ENCODE measurements at regions of chr4 and their contacts with region 1.

Region 1: DNA sequence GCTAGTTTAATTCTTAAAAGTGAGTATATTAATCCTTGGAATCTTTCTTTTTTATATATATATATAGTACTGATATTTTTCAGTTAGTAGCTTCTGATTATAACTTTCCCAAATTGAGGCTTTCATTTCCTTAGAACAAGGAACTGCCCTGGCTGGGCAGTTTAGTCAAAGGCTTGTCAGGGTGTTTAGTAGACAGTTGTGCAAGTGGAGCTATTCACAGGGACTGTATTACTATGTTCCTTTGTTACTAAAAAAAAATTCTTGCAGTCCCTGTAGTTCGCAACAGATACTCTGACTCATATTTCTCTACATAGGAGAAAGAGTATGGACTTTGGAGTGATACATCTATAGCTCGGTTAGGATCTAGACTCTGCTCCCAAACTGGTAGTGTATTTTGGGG is 20.8 kb downstream of the USO1 start:
- DNase-seq: peak; percentile 78
- H3K4me3 Mint-ChIP-seq: no peak overlapping the region
- H3K27ac Mint-ChIP-seq: peak overlapping the region; percentile 47
- H3K4me1 Mint-ChIP-seq: peaks cover 7% of the 10 kb centered on the region
- H3K27me3 Mint-ChIP-seq: no peaks in the 10 kb centered on the region
- CTCF ChIP-seq: no peak

Region 2: DNA sequence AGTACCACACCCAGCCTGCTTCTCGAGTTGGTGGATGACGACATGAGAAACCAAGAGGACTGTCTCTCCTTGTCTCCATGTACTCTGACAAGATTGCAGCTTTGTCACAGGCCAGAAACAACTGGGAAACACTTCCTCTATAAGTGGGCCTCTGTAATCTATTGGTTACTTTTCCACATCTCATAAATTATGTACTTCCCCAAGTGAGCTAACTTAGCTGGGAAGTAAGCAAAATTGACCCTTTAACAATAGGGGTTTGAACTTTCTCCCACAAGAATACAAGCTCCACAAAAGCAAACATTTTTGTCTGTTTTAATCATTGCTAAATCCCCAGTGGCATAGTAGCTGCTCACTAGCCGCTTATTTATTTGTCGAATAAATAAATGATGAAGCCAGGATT is 34.9 kb before region 1 on chr4:
- CTCF ChIA-PET with region 1: no interaction called
- POLR2A ChIA-PET with region 1: interaction called, 10 read pairs
- intact Hi-C with region 1: no loop called
- DNase-seq: no peak
- H3K4me3 Mint-ChIP-seq: no peak overlapping the region
- H3K27ac Mint-ChIP-seq: no peak overlapping the region
- H3K4me1 Mint-ChIP-seq: no peaks in the 10 kb centered on the region
- H3K27me3 Mint-ChIP-seq: no peaks in the 10 kb centered on the region
- CTCF ChIP-seq: no peak

Region 3: GRCh38 chr4:75895744-75896314 is 150.7 kb after region 1 on chr4:
- CTCF ChIA-PET with region 1: no interaction called
- POLR2A ChIA-PET with region 1: no interaction called
- intact Hi-C with region 1: no loop called
- DNase-seq: peak; percentile 54
- H3K4me3 Mint-ChIP-seq: no peak overlapping the region
- H3K27ac Mint-ChIP-seq: no peak overlapping the region
- H3K4me1 Mint-ChIP-seq: no peaks in the 10 kb centered on the region
- H3K27me3 Mint-ChIP-seq: no peaks in the 10 kb centered on the region
- CTCF ChIP-seq: peak; percentile 65

Region 4: DNA sequence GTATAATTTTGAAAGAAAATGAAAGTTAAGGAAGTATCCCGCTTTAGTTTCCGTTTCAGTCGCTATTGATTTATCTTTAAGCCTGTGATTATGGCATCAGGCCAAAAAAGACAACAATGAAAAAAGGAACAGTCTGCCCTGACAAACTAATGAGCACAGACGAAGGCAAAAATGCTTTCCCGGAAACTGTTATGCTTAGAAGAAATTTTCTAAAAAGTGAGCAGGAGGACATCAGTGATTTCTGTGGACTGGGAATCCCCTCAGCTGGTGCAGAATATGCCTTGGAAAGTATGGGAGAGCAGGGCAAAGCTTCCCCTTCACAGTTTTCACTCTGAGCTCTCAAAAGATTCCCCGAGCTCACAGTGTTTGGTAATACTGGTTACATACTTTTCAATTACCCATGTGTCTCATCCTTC is 283.2 kb after region 1 on chr4:
- CTCF ChIA-PET with region 1: no interaction called
- POLR2A ChIA-PET with region 1: no interaction called
- intact Hi-C with region 1: no loop called
- DNase-seq: peak; percentile 6
- H3K4me3 Mint-ChIP-seq: peak overlapping the region; percentile 26
- H3K27ac Mint-ChIP-seq: no peak overlapping the region
- H3K4me1 Mint-ChIP-seq: peaks cover 6% of the 10 kb centered on the region
- H3K27me3 Mint-ChIP-seq: no peaks in the 10 kb centered on the region
- CTCF ChIP-seq: no peak